GM12878 (cell line): ENCODE measurements at regions of chr1 and their contacts with region 1.

Region 1: DNA sequence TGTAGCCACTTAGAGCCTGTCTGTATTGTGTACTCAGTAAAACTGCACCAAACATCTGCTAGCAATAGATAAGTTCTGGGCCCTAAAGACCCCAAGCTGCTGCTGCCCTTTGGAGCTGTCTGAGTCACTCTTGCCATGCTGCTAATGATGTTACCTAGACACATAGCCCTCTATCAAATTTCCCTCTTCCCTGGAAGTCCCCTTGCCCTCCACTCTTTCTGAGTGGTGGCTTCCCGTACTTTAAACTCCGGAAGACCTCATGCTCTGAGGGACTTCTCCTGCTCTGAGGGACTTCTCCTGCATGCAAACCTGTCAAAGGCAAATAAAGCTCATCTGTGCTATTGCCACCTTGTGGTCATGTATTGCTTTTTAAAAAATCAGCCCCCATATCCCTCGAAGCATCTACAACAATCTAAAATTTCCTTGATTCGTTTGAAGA is 34.0 kb downstream of the FH start:
- DNase-seq: peak; percentile 23
- ATAC-seq: peak; percentile 84
- H3K4me3 ChIP-seq: no peak overlapping the region
- H3K27ac ChIP-seq: no peak overlapping the region
- H3K4me1 ChIP-seq: peaks cover 3% of the 10 kb centered on the region; the same call in 1 of the 2 replicates
- H3K27me3 ChIP-seq: no peaks in the 10 kb centered on the region
- CTCF ChIP-seq: peak; percentile 42 to 50 (median 48); a peak in 4 of 6 replicates
- EP300 ChIP-seq: no peak
- POLR2A ChIP-seq: no peak
- RAD21 ChIP-seq: peak; percentile 38; the same call in 1 of the 2 replicates

Region 2: DNA sequence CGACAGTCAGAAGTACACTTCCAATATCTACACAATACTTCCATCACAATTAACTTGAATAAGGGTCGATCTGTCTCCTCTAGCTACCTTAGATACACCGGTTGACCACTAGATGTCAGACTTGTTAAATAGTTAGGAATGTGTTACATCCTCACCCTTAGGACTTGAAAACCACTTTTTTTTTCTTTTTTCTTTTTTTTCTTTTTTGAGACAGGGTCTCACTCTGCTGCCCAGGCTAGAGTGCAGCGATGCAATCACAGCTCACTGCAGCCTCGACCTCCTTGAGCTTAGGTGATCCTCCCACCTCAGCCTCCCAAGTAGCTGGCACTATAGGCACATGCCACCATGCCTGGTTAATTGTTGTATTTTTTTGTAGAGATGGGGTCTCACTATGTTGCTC is 753.2 kb before region 1 on chr1:
- CTCF ChIA-PET with region 1: interaction called, 16 read pairs
- POLR2A ChIA-PET with region 1: no interaction called
- RAD21 ChIA-PET with region 1: interaction called, 9 read pairs
- SMC1A ChIA-PET with region 1: interaction called, 4 read pairs
- in situ Hi-C with region 1: loop called (anchors 10 kb)
- intact Hi-C with region 1: loop called (anchors 1 kb)
- DNase-seq: no peak
- ATAC-seq: peak; percentile 92
- H3K4me3 ChIP-seq: no peak overlapping the region
- H3K27ac ChIP-seq: no peak overlapping the region
- H3K4me1 ChIP-seq: no peaks in the 10 kb centered on the region
- H3K27me3 ChIP-seq: no peaks in the 10 kb centered on the region
- CTCF ChIP-seq: peak; percentile 53 to 61 (median 59); a peak in 5 of 6 replicates
- EP300 ChIP-seq: no peak
- POLR2A ChIP-seq: no peak
- RAD21 ChIP-seq: peak; percentile 70

Region 3: DNA sequence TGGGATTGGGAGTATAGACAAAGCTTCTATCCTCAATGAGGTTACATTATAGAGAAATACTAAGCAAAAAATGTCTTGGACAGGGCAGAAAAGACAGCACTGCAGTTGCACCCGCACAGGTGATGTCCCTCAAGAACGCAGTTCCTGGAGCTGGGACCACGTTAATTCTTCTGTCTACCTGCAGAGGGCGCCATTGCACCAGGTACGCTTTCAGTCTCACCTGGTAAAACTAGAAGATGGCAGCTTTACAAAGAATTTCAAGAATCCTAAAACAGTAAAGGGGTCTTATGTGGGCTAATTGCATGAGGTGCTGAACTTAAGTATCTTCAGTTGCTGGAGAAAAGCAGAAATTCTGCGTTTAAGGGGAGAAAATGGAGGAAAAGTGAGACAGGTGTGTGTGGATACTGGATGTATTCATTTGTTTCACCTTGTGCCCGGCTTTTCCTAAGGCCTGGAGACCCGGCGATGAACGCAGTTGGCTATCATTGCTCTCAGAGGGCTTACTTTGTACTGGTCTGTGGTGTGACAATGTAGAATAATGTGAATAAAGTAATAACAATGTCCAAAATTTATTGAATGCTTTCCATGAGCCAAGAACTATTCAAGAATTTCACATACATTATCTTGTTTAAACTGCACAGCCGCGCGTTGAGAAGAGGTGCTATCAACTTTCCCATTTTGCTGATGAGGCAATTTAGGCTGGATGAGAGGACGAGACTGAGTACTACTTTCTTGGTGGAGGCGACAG is 597.4 kb before region 1 on chr1:
- CTCF ChIA-PET with region 1: interaction called, 16 read pairs
- POLR2A ChIA-PET with region 1: no interaction called
- RAD21 ChIA-PET with region 1: interaction called, 10 read pairs
- SMC1A ChIA-PET with region 1: interaction called, 14 read pairs
- in situ Hi-C with region 1: loop called (anchors 10 kb)
- intact Hi-C with region 1: loop called (anchors 5 kb)
- DNase-seq: no peak
- ATAC-seq: peak; percentile 82
- H3K4me3 ChIP-seq: no peak overlapping the region
- H3K27ac ChIP-seq: no peak overlapping the region
- H3K4me1 ChIP-seq: no peaks in the 10 kb centered on the region
- H3K27me3 ChIP-seq: no peaks in the 10 kb centered on the region
- CTCF ChIP-seq: peak; percentile 73 to 76 (median 75)
- EP300 ChIP-seq: no peak
- POLR2A ChIP-seq: no peak
- RAD21 ChIP-seq: peak; percentile 82

Region 4: GRCh38 chr1:240967070-240967724 is 518.4 kb before region 1 on chr1:
- CTCF ChIA-PET with region 1: interaction called, 4 read pairs
- POLR2A ChIA-PET with region 1: no interaction called
- RAD21 ChIA-PET with region 1: interaction called, 4 read pairs
- SMC1A ChIA-PET with region 1: no interaction called
- in situ Hi-C with region 1: no loop called
- intact Hi-C with region 1: loop called (anchors 5 kb)
- DNase-seq: no peak
- ATAC-seq: peak; percentile 45
- H3K4me3 ChIP-seq: no peak overlapping the region
- H3K27ac ChIP-seq: no peak overlapping the region
- H3K4me1 ChIP-seq: no peaks in the 10 kb centered on the region
- H3K27me3 ChIP-seq: no peaks in the 10 kb centered on the region
- CTCF ChIP-seq: peak in 1 of 3 experiments; percentile 10; a peak in 1 of 6 replicates
- EP300 ChIP-seq: no peak
- POLR2A ChIP-seq: no peak
- RAD21 ChIP-seq: peak; percentile 30; the same call in 1 of the 2 replicates

Region 5: GRCh38 chr1:241311056-241311746 is 174.4 kb before region 1 on chr1:
- CTCF ChIA-PET with region 1: interaction called, 16 read pairs
- POLR2A ChIA-PET with region 1: no interaction called
- RAD21 ChIA-PET with region 1: interaction called, 3 read pairs
- SMC1A ChIA-PET with region 1: no interaction called
- in situ Hi-C with region 1: no loop called
- intact Hi-C with region 1: no loop called
- DNase-seq: no peak
- ATAC-seq: no peak
- H3K4me3 ChIP-seq: no peak overlapping the region
- H3K27ac ChIP-seq: no peak overlapping the region
- H3K4me1 ChIP-seq: no peaks in the 10 kb centered on the region
- H3K27me3 ChIP-seq: no peaks in the 10 kb centered on the region; a peak in 1 of 4 replicates
- CTCF ChIP-seq: peak in 1 of 3 experiments; percentile 24; a peak in 1 of 6 replicates
- EP300 ChIP-seq: no peak
- POLR2A ChIP-seq: no peak
- RAD21 ChIP-seq: no peak

Region 6: GRCh38 chr1:241443561-241443960 is 42.0 kb before region 1 on chr1:
- CTCF ChIA-PET with region 1: no interaction called
- POLR2A ChIA-PET with region 1: no interaction called
- RAD21 ChIA-PET with region 1: no interaction called
- SMC1A ChIA-PET with region 1: no interaction called
- in situ Hi-C with region 1: no loop called
- intact Hi-C with region 1: no loop called
- DNase-seq: no peak
- ATAC-seq: no peak
- H3K4me3 ChIP-seq: no peak overlapping the region
- H3K27ac ChIP-seq: no peak overlapping the region
- H3K4me1 ChIP-seq: no peaks in the 10 kb centered on the region
- H3K27me3 ChIP-seq: 0 out of 4 replicates have a peak, but pooled peaks cover 0 to 2% of the 10 kb centered on the region in 2 experiments
- CTCF ChIP-seq: no peak
- EP300 ChIP-seq: no peak
- POLR2A ChIP-seq: no peak
- RAD21 ChIP-seq: no peak

Region 7: GRCh38 chr1:241579426-241579825 is 93.9 kb after region 1 on chr1:
- CTCF ChIA-PET with region 1: no interaction called
- POLR2A ChIA-PET with region 1: no interaction called
- RAD21 ChIA-PET with region 1: no interaction called
- SMC1A ChIA-PET with region 1: no interaction called
- in situ Hi-C with region 1: no loop called
- intact Hi-C with region 1: no loop called
- DNase-seq: no peak
- ATAC-seq: no peak
- H3K4me3 ChIP-seq: no peak overlapping the region
- H3K27ac ChIP-seq: no peak overlapping the region
- H3K4me1 ChIP-seq: no peaks in the 10 kb centered on the region
- H3K27me3 ChIP-seq: no peaks in the 10 kb centered on the region
- CTCF ChIP-seq: no peak
- EP300 ChIP-seq: no peak
- POLR2A ChIP-seq: no peak
- RAD21 ChIP-seq: no peak

Region 8: GRCh38 chr1:242043165-242043564 is 557.6 kb after region 1 on chr1:
- CTCF ChIA-PET with region 1: no interaction called
- POLR2A ChIA-PET with region 1: no interaction called
- RAD21 ChIA-PET with region 1: no interaction called
- SMC1A ChIA-PET with region 1: no interaction called
- in situ Hi-C with region 1: no loop called
- intact Hi-C with region 1: no loop called
- DNase-seq: no peak
- ATAC-seq: no peak
- H3K4me3 ChIP-seq: no peak overlapping the region
- H3K27ac ChIP-seq: no peak overlapping the region
- H3K4me1 ChIP-seq: no peaks in the 10 kb centered on the region
- H3K27me3 ChIP-seq: no peaks in the 10 kb centered on the region
- CTCF ChIP-seq: no peak
- EP300 ChIP-seq: no peak
- POLR2A ChIP-seq: no peak
- RAD21 ChIP-seq: no peak